CD4-positive, alpha-beta T cell (primary cell): ENCODE measurements at regions of chr10 and their contacts with region 1.

Region 1: GRCh38 chr10:43461950-43462349 is 25.0 kb downstream of the ZNF487 start:
- DNase-seq: peak in 5 of 14 experiments; percentile 12 to 89 (median 83)
- ATAC-seq: peak; percentile 87
- H3K4me3 ChIP-seq: no peak overlapping the region
- H3K4me3 Mint-ChIP-seq: no peak overlapping the region
- H3K27ac ChIP-seq: no peak overlapping the region
- H3K27ac Mint-ChIP-seq: peak overlapping the region; percentile 2
- H3K4me1 ChIP-seq: peaks cover 9% of the 10 kb centered on the region
- H3K4me1 Mint-ChIP-seq: peaks cover 20% of the 10 kb centered on the region
- H3K27me3 ChIP-seq: no peaks in the 10 kb centered on the region
- H3K27me3 Mint-ChIP-seq: no peaks in the 10 kb centered on the region
- CTCF ChIP-seq: peak; percentile 86

Region 2: GRCh38 chr10:42782446-42783180 is 679.3 kb before region 1 on chr10 and contains the start of gene BMS1:
- CTCF ChIA-PET with region 1: no interaction called
- POLR2A ChIA-PET with region 1: no interaction called
- intact Hi-C with region 1: loop called in 1 of 2 experiments (anchors 10 kb)
- DNase-seq: peak; percentile 79 to 93 (median 85)
- ATAC-seq: peak; percentile 85
- H3K4me3 ChIP-seq: peak within 1 kb of the TSS; percentile 65
- H3K4me3 Mint-ChIP-seq: peak within 1 kb of the TSS; percentile 99
- H3K27ac ChIP-seq: peak within 1 kb of the TSS; percentile 65
- H3K27ac Mint-ChIP-seq: peak within 1 kb of the TSS; percentile 88
- H3K4me1 ChIP-seq: peaks cover 16% of the 10 kb centered on the region
- H3K4me1 Mint-ChIP-seq: peaks cover 34% of the 10 kb centered on the region
- H3K27me3 ChIP-seq: no peaks in the 10 kb centered on the region
- H3K27me3 Mint-ChIP-seq: peaks cover 3% of the 10 kb centered on the region
- CTCF ChIP-seq: no peak
- total RNA-seq, gene BMS1: 13.8 to 15.3 TPM

Region 3: DNA sequence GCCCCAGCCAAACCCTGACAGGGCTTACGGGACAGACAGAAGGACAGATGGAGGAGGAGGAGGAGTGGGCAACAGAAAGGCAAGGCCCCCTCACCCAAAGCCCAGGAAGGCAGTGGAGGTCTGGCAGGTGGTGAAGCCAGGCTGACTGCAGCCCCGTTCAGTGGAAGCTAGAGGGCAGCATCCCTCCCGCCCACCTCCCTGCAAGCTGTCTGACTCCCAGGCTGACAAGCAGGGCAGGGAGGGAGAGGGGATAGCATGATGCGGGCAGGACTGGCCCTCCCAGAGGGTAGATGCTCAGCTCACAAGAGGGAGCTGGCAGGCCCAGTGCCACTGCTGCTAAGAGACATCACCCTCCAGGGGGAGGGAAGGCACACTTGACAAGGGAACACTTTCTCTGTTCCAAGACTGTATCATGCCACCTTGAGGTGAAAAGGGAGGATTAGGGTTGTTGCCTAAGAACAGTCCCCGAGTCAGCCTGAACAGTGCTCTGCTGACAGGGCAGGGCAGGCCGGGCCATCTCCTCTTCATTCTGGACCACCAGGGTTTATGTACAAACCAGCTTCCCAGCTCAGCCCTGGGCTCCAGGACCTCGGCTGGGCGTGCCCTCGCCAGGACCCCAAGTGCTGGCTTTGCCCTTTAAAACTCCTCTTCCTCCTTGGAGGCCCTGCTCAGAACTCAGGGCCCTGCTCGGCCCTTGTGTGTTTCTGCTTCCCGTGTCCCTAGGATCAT is 256.8 kb before region 1 on chr10:
- CTCF ChIA-PET with region 1: interaction called, 3 read pairs
- POLR2A ChIA-PET with region 1: no interaction called
- intact Hi-C with region 1: loop called in 1 of 2 experiments (anchors 2 kb)
- DNase-seq: peak; percentile 25 to 76 (median 41)
- ATAC-seq: peak; percentile 63
- H3K4me3 ChIP-seq: no peak overlapping the region
- H3K4me3 Mint-ChIP-seq: no peak overlapping the region
- H3K27ac ChIP-seq: no peak overlapping the region
- H3K27ac Mint-ChIP-seq: peak overlapping the region; percentile 24
- H3K4me1 ChIP-seq: peaks cover 22% of the 10 kb centered on the region
- H3K4me1 Mint-ChIP-seq: peaks cover 6% of the 10 kb centered on the region
- H3K27me3 ChIP-seq: no peaks in the 10 kb centered on the region
- H3K27me3 Mint-ChIP-seq: no peaks in the 10 kb centered on the region
- CTCF ChIP-seq: peak; percentile 70

Region 4: GRCh38 chr10:43292755-43293676 is 168.9 kb before region 1 on chr10:
- CTCF ChIA-PET with region 1: interaction called, 6 read pairs
- POLR2A ChIA-PET with region 1: no interaction called
- intact Hi-C with region 1: loop called (anchors 1 kb)
- DNase-seq: peak in 12 of 14 experiments; percentile 25 to 75 (median 43)
- ATAC-seq: peak; percentile 63
- H3K4me3 ChIP-seq: no peak overlapping the region
- H3K4me3 Mint-ChIP-seq: no peak overlapping the region
- H3K27ac ChIP-seq: peak overlapping the region in 1 of 2 donors; percentile 73
- H3K27ac Mint-ChIP-seq: peak overlapping the region; percentile 50
- H3K4me1 ChIP-seq: peaks cover 50% of the 10 kb centered on the region
- H3K4me1 Mint-ChIP-seq: peaks cover 59% of the 10 kb centered on the region
- H3K27me3 ChIP-seq: no peaks in the 10 kb centered on the region
- H3K27me3 Mint-ChIP-seq: peaks cover 12% of the 10 kb centered on the region
- CTCF ChIP-seq: peak; percentile 72

Region 5: DNA sequence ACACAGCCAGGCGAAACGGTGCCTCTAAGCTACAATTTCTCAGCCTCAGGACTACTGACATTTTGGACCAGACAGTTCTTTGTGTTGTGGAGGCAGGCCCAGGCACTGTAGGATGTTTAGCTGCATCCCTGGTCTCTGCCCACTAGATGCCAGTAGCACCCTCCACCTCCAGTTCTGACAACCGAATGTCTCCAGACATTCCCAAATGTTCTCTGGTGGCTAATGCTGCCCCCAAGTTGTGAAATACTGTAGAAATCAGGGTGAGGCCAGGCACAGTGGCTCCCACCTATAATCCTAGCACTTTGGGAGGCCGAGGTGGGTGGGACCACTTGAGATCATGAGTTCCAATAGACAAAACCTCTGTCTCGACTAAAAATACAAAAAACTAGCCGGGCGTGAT is 71.2 kb before region 1 on chr10:
- CTCF ChIA-PET with region 1: interaction called, 7 read pairs
- POLR2A ChIA-PET with region 1: no interaction called
- intact Hi-C with region 1: loop called (anchors 1 to 2 kb)
- DNase-seq: peak in 9 of 14 experiments; percentile 12 to 73 (median 28)
- ATAC-seq: peak; percentile 69
- H3K4me3 ChIP-seq: no peak overlapping the region
- H3K4me3 Mint-ChIP-seq: no peak overlapping the region
- H3K27ac ChIP-seq: no peak overlapping the region
- H3K27ac Mint-ChIP-seq: peak overlapping the region; percentile 82
- H3K4me1 ChIP-seq: peaks cover 68% of the 10 kb centered on the region
- H3K4me1 Mint-ChIP-seq: peaks cover 81% of the 10 kb centered on the region
- H3K27me3 ChIP-seq: no peaks in the 10 kb centered on the region
- H3K27me3 Mint-ChIP-seq: no peaks in the 10 kb centered on the region
- CTCF ChIP-seq: peak; percentile 26

Region 6: DNA sequence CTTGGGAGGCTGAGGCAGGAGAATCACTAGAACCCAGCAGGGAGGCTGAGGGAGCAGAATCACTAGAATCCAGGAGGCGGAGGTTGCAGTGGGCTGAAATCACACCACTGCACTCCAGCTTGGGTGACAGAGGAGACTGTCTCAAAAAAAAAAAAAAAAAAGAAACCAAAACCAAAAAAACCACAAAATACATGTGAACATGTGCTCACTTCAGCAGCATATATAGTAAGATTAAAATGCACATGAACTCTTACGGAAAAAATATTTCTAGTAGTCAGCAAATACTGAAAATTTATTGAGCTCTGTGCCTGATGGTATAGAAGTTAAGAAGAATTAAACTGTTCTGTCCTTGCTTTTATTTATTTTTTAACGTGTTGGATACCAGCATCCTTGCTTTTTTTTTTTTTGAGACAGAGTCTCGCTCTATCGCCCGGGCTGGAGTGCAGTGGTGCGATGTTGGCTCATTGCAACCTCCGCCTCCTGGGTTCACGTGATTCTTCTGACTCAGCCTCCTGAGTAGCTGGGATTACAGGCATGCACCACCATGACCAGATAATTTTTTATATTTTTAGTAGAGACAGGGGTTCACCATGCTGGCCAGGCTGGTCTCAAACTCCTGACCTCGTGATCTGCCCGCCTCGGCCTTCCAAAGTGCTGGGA is 34.7 kb before region 1 on chr10:
- CTCF ChIA-PET with region 1: no interaction called
- POLR2A ChIA-PET with region 1: no interaction called
- intact Hi-C with region 1: no loop called
- DNase-seq: peak in 12 of 14 experiments; percentile 22 to 63 (median 44)
- ATAC-seq: peak; percentile 95
- H3K4me3 ChIP-seq: peak overlapping the region; percentile 9
- H3K4me3 Mint-ChIP-seq: peak overlapping the region; percentile 76
- H3K27ac ChIP-seq: no peak overlapping the region
- H3K27ac Mint-ChIP-seq: peak overlapping the region; percentile 89
- H3K4me1 ChIP-seq: peaks cover 21% of the 10 kb centered on the region
- H3K4me1 Mint-ChIP-seq: peaks cover 21% of the 10 kb centered on the region
- H3K27me3 ChIP-seq: no peaks in the 10 kb centered on the region
- H3K27me3 Mint-ChIP-seq: no peaks in the 10 kb centered on the region
- CTCF ChIP-seq: no peak